ENCODE measurements at regions of chr10 and their contacts with region 1.

Region 1: GRCh38 chr10:97498076-97498840 is at the start of gene MMS19:
- DNase-seq: peak; percentile 96 to 99 (median 98)
- H3K4me3 ChIP-seq: peak within 1 kb of the TSS; percentile 57 to 100 (median 97)
- H3K27ac ChIP-seq: peak within 1 kb of the TSS; percentile 64 to 98 (median 93)
- H3K27me3 ChIP-seq: no peaks in the 10 kb centered on the region
- CTCF ChIP-seq: peak in 46 of 56 donors; percentile 9 to 72 (median 40)
- total RNA-seq, gene MMS19: 53.4 to 109 (median 81.4) TPM

Region 2: GRCh38 chr10:97445722-97446639 is 52.3 kb before region 1 on chr10 and contains the starts of genes EXOSC1 and ZDHHC16:
- intact Hi-C with region 1: loop called in 1 of 2 experiments (anchors 5 kb)
- DNase-seq: peak; percentile 85 to 99 (median 97)
- H3K4me3 ChIP-seq: peak within 1 kb of the TSS; percentile 71 to 100 (median 93)
- H3K27ac ChIP-seq: peak within 1 kb of the TSS in 51 of 59 donors; percentile 2 to 91 (median 74)
- H3K27me3 ChIP-seq: no peaks in the 10 kb centered on the region
- CTCF ChIP-seq: peak in 53 of 56 donors; percentile 22 to 76 (median 54)
- total RNA-seq, gene EXOSC1: 23.5 to 46.9 (median 33.8) TPM
- total RNA-seq, gene ZDHHC16: 22.2 to 46.8 (median 31.1) TPM

Region 3: DNA sequence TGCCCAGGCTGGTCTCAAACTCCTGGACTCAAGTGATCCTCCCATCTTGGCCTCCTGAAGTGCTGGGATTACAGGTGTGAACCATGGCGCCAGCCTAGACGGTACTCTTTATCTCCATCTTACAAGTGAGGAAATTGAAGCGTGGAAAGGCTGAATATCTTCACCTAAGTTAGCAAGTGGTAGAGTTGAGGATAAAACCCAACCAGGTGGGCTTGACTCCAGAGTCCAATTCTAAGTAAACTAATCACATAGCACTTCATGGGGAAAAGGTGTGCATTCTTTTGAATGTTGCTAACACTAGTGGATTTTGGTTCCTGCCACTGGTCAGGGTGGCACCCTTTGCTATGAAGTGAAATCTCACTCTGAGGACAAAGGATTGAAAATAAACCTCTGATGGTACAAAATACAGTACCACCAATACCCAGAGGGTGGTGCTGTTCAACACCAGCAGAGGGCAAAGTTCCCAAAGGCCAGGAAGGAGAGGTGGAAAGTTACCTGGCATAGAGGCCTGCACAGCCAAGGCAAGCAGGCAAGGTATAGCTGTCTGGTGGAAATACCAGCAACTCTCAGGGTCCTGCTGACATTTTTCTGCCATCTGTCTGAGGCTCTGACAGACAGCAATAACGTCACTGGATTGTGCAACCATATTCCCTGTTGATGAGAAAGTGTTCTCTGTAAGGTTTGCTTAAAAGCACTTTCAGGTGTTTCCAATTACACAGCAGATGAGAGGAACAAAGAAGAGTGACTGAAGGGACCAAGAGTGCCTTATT is 34.7 kb before region 1 on chr10:
- intact Hi-C with region 1: loop called in 1 of 2 experiments (anchors 5 kb)
- DNase-seq: peak in 2 of 10 donors; percentile 25 to 50
- H3K4me3 ChIP-seq: no peak overlapping the region
- H3K27ac ChIP-seq: peak overlapping the region in 43 of 59 donors; percentile 4 to 65 (median 37)
- H3K27me3 ChIP-seq: no peaks in the 10 kb centered on the region
- CTCF ChIP-seq: peak; percentile 68 to 96 (median 88)

Region 4: GRCh38 chr10:97543025-97543575 is 44.8 kb after region 1 on chr10:
- intact Hi-C with region 1: loop called (anchors 2 to 5 kb)
- DNase-seq: peak; percentile 33 to 97 (median 90)
- H3K4me3 ChIP-seq: peak overlapping the region in 11 of 59 donors; percentile 5 to 33 (median 13)
- H3K27ac ChIP-seq: peak overlapping the region; percentile 87 to 100 (median 97)
- H3K27me3 ChIP-seq: no peaks in the 10 kb centered on the region
- CTCF ChIP-seq: peak in 15 of 56 donors; percentile 6 to 39 (median 17)

Region 5: GRCh38 chr10:97553575-97554031 is 55.3 kb after region 1 on chr10:
- intact Hi-C with region 1: loop called in 1 of 2 experiments (anchors 2 kb)
- DNase-seq: peak in 9 of 10 donors; percentile 62 to 81 (median 75)
- H3K4me3 ChIP-seq: no peak overlapping the region
- H3K27ac ChIP-seq: peak overlapping the region in 6 of 59 donors; percentile 6 to 66 (median 20)
- H3K27me3 ChIP-seq: no peaks in the 10 kb centered on the region
- CTCF ChIP-seq: peak; percentile 40 to 93 (median 80)